Activated CD4-positive, alpha-beta memory T cell treated with anti-CD3 and anti-CD28 coated beads, Interleukin-2, amount 10 ng/mL, durations not matched to agents 7 days and 5 days (primary cell): ENCODE measurements at regions of chr3 and their contacts with region 1.

Region 1: DNA sequence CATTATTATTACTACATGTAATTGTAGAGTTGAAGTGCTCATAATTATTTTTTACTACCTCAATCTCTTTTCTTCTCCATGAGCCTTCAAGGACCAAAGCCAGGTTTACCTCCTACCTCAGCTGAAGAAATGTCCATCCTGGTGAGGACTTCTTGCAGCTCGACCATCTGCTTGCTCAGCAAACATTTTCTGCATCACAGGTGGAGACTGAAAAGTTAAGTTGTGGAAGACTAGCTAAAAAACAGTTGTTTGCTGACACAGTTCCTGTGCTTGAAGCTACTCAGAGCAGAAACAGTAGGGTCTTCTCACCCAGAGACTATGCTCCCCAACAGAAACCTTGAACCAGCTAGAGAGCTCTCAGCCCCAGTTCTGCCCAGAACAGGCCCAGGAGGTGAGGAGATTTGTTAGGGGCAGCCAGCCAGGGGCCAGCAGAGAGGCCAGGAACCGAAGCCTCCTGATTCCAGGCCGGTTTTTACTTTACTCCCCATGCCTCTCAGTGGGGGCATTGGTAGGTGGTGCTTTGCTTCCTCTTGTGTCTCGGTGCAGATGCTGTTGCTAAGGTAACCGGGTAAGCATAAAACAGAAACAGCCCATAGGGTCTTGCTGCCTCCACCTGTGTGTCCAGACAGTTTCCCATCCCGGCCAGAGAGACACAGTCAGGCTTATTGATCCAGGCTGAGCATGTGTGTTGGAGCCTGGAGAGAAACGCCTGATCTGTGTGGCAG is 54.9 kb downstream of the CCNL1 start:
- DNase-seq: no peak
- H3K4me3 Mint-ChIP-seq: no peak overlapping the region
- H3K27ac Mint-ChIP-seq: peak overlapping the region; percentile 83
- H3K4me1 Mint-ChIP-seq: peaks cover 50% of the 10 kb centered on the region
- H3K27me3 Mint-ChIP-seq: no peaks in the 10 kb centered on the region

Region 2: GRCh38 chr3:157122116-157122515 is 17.0 kb after region 1 on chr3:
- CTCF ChIA-PET with region 1: no interaction called
- POLR2A ChIA-PET with region 1: interaction called, 83 read pairs
- DNase-seq: no peak
- H3K4me3 Mint-ChIP-seq: no peak overlapping the region
- H3K27ac Mint-ChIP-seq: no peak overlapping the region
- H3K4me1 Mint-ChIP-seq: peaks cover 34% of the 10 kb centered on the region
- H3K27me3 Mint-ChIP-seq: no peaks in the 10 kb centered on the region

Region 3: GRCh38 chr3:157290766-157291165 is 185.7 kb after region 1 on chr3:
- CTCF ChIA-PET with region 1: no interaction called
- POLR2A ChIA-PET with region 1: no interaction called
- DNase-seq: no peak
- H3K4me3 Mint-ChIP-seq: no peak overlapping the region
- H3K27ac Mint-ChIP-seq: no peak overlapping the region
- H3K4me1 Mint-ChIP-seq: no peaks in the 10 kb centered on the region
- H3K27me3 Mint-ChIP-seq: peaks cover 4% of the 10 kb centered on the region